Colonic mucosa (tissue), 4 donors: ENCODE measurements at regions of chr1 and their contacts with region 1.

Region 1: GRCh38 chr1:47179017-47179987 is 10.5 kb downstream of the PDZK1IP1 start:
- DNase-seq: peak; percentile 92
- H3K4me3 ChIP-seq: peak overlapping the region; percentile 28
- H3K27ac ChIP-seq: peak overlapping the region; percentile 78
- H3K4me1 ChIP-seq: no peaks in the 10 kb centered on the region
- H3K27me3 ChIP-seq: no peaks in the 10 kb centered on the region
- CTCF ChIP-seq: peak; percentile 77

Region 2: DNA sequence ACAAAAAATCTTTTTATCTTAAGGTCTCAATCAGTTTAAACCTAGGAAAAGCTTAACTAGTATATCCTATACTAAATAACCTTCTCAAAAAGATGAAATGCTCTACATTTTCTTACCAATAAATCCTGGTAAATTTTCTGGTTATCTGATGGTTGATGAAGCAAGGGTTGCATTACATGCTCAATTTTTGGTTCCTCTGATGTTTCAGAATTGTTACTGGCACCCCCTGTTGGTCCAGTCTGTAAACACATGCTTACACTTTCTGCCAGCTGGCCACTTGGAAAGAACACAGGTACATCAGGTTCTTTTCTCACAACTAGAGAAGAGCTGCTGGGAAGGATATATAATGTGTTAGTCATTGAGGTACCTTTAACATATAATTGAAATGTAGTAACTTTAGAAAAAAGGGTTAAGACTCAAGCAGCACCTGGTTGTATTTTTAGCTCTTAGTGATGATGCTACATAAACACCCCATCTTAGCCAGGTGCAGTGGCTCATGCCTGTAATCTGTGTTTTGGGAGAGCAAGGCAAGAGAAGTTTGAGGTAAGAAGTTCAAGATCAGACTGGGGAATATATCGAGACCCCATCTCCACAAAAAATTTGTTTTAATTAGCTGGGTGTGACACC is 83.6 kb after region 1 on chr1:
- intact Hi-C with region 1: loop called (anchors 2 kb)
- DNase-seq: peak; percentile 60
- H3K4me3 ChIP-seq: no peak overlapping the region
- H3K27ac ChIP-seq: no peak overlapping the region
- H3K4me1 ChIP-seq: no peaks in the 10 kb centered on the region
- H3K27me3 ChIP-seq: no peaks in the 10 kb centered on the region
- CTCF ChIP-seq: peak; percentile 52

Region 3: GRCh38 chr1:47313915-47314664 is 134.8 kb after region 1 on chr1 and contains the start of gene STIL:
- intact Hi-C with region 1: no loop called
- DNase-seq: peak; percentile 99
- H3K4me3 ChIP-seq: peak within 1 kb of the TSS; percentile 70
- H3K27ac ChIP-seq: peak within 1 kb of the TSS; percentile 80
- H3K4me1 ChIP-seq: no peaks in the 10 kb centered on the region
- H3K27me3 ChIP-seq: no peaks in the 10 kb centered on the region
- CTCF ChIP-seq: no peak
- total RNA-seq, gene STIL: 9.6 to 22.0 TPM